ENCODE measurements at regions of chr12 and their contacts with region 1.

Region 1: GRCh38 chr12:39145175-39145999 is 240.0 kb upstream of the CPNE8 start:
- DNase-seq: no peak
- H3K4me3 ChIP-seq: peak overlapping the region; percentile 50 to 70 (median 52)
- H3K27ac ChIP-seq: peak overlapping the region in 1 of 4 donors; percentile 33
- H3K4me1 ChIP-seq: peaks cover 3 to 18% (median 10%) of the 10 kb centered on the region in 3 donors
- H3K27me3 ChIP-seq: peaks cover 0 to 38% (median 0%) of the 10 kb centered on the region in 4 donors
- CTCF ChIP-seq: peak in 5 of 6 experiments; percentile 46 to 82 (median 66)
- POLR2A ChIP-seq: no peak

Region 2: GRCh38 chr12:39157696-39158342 is 12.4 kb after region 1 on chr12:
- intact Hi-C with region 1: no loop called
- DNase-seq: no peak
- H3K4me3 ChIP-seq: no peak overlapping the region
- H3K27ac ChIP-seq: no peak overlapping the region
- H3K4me1 ChIP-seq: no peaks in the 10 kb centered on the region
- H3K27me3 ChIP-seq: no peaks in the 10 kb centered on the region
- CTCF ChIP-seq: no peak
- POLR2A ChIP-seq: no peak

Region 3: DNA sequence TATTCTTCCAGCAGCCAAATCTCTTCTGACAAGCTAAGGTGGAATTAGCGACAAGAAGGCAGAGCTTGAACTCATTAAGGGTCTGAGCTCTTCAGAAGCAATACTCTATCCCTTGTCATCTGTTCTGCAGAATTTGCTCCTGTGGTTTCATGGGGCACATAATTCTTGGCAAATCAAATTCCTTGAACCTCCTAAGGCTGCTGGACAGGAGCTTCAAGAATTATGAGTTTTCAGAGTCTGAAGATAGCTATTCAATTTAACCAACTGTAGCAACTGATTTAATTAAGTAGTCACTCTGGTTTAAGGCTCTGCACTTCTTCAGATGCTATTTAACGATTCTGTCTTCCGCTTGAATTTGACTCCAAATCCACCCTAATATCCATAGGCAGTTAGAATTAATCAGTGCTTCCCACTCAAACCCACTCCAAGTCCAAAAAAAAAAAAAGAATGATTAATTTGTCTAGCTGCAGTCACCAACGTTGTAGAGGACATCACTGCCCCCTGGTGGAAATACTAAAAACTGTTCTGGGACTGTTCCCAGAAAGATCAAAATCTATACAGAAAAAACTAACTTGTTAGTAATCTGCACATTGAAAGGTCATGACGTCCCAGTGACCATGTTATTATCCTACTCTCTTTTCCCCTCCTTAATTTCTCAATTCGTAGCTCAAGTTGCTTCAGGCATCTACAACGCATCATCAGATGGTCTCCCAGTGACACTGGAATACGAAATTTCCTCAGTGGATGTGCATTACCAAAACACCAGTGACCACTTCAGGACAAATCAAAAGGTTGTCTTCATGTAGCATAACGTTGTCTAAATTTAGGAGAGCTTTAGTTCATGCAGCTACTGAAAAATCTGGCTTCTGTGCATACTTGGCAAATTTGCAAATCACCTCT is 127.7 kb after region 1 on chr12:
- intact Hi-C with region 1: loop called (anchors 10 kb)
- DNase-seq: no peak
- H3K4me3 ChIP-seq: no peak overlapping the region
- H3K27ac ChIP-seq: no peak overlapping the region
- H3K4me1 ChIP-seq: no peaks in the 10 kb centered on the region
- H3K27me3 ChIP-seq: peaks cover 0 to 4% (median 0%) of the 10 kb centered on the region in 4 donors
- CTCF ChIP-seq: peak in 3 of 6 experiments; percentile 30 to 57 (median 35)
- POLR2A ChIP-seq: no peak

Measured in esophagus squamous epithelium (tissue), 5 donors.